ENCODE measurements at regions of chr9 and their contacts with region 1.

Region 1: GRCh38 chr9:80605129-80605528 is 1033.4 kb downstream of the TLE4 start:
- DNase-seq: peak in 1 of 2 experiments; percentile 37
- H3K4me3 ChIP-seq: no peak overlapping the region
- H3K27ac ChIP-seq: no peak overlapping the region
- H3K4me1 ChIP-seq: no peaks in the 10 kb centered on the region
- H3K27me3 ChIP-seq: no peaks in the 10 kb centered on the region
- CTCF ChIP-seq: peak; percentile 47; the same call in 1 of the 2 replicates

Region 2: GRCh38 chr9:80449513-80449912 is 155.6 kb before region 1 on chr9:
- CTCF ChIA-PET with region 1: no interaction called
- POLR2A ChIA-PET with region 1: no interaction called
- intact Hi-C with region 1: no loop called
- DNase-seq: no peak
- H3K4me3 ChIP-seq: no peak overlapping the region
- H3K27ac ChIP-seq: no peak overlapping the region
- H3K4me1 ChIP-seq: no peaks in the 10 kb centered on the region
- H3K27me3 ChIP-seq: no peaks in the 10 kb centered on the region
- CTCF ChIP-seq: no peak

Region 3: GRCh38 chr9:81292056-81292735 is 687.1 kb after region 1 on chr9:
- CTCF ChIA-PET with region 1: no interaction called
- POLR2A ChIA-PET with region 1: no interaction called
- intact Hi-C with region 1: loop called (anchors 5 kb)
- DNase-seq: no peak
- H3K4me3 ChIP-seq: no peak overlapping the region
- H3K27ac ChIP-seq: no peak overlapping the region
- H3K4me1 ChIP-seq: no peaks in the 10 kb centered on the region
- H3K27me3 ChIP-seq: no peaks in the 10 kb centered on the region
- CTCF ChIP-seq: no peak